ENCODE measurements at regions of chr19 and their contacts with region 1.

Region 1: DNA sequence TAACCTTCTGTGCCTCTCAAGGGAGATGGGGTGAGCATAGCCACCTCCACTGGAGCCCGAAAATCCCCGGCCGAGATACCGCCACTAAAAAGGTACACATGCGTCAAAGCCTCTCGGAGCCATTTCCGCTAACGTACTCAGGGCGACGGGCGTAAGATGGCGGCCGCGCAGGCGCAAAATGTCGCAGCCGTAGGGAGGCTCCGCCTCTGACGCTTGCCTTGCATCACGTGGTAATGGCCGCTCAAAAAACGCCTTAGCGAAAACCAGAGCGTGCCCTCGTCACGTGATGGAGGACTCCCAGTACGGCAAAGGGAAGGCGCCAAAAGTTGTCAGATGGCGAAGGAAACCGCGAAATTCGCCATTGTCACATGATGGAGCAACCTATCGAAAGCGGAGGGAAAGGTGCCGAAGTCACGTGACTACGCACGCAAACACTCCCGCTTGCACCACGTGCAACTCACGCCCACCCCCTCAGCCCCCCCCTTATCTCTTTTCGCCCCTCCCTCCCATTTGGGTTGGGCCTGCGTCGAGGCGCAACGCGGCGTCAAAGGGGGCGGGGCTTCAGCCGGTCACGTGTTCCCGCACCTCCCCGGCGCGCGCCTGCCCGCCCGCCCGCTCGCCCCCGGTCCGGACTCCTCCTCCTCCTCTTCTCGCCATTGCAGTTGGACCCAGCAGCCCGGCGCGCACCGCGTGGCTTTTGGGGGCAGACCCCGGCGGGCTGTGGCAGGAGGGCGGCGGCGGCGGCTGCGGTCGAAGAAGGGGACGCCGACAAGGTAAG is at the start of gene ILF3:
- DNase-seq: peak; percentile 100
- H3K4me3 Mint-ChIP-seq: peak within 1 kb of the TSS; percentile 90
- H3K27ac Mint-ChIP-seq: peak within 1 kb of the TSS; percentile 96
- H3K4me1 Mint-ChIP-seq: peaks cover 35% of the 10 kb centered on the region
- H3K27me3 Mint-ChIP-seq: no peaks in the 10 kb centered on the region
- total RNA-seq, gene ILF3: 355 to 357 TPM

Region 2: DNA sequence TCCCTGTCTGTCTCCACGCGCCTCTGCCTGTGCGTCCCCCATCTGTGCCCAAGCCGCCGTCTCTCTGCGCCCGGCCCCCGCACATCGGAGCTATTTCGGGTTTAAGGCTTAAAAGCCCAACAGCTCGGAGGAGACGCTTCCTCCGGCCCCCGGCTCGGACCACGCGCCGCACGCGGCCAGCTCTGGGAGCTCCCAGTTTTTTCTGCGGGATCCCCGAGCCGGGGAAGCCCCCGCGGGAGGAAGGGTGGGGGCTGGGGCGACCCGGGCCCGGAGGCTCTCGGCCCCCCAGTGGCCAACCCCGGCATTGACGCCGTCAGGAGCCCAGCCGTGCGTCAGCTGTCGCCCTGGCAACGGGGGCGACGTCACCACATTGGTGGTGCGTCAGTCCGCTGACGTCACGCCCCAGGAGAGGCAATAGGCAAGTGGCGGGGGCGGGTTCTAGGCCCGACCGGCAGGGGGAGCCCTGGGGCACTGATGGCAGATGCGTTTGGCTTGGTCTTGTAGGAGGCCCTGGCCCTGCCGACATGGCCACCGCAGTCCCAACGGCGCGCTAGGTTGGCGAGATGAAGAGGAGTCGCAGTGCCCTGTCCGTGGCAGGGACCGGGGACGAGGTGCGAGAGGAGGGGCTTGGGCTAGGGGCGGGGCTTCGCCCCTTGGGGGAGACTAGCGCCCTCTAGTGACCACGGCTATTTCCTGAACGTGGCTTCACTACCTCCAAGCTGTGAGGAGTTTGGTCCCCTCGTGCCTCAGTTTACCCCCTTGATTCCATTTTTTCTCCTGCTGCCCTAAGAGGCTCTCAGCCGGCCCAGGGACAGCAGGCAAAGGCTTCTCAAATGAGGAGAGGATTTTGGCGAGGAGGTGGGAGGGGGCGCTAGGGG is 237.3 kb before region 1 on chr19:
- CTCF ChIA-PET with region 1: interaction called, 5 read pairs
- POLR2A ChIA-PET with region 1: no interaction called
- intact Hi-C with region 1: loop called (anchors 5 kb)
- DNase-seq: peak; percentile 96
- H3K4me3 Mint-ChIP-seq: peak overlapping the region; percentile 73
- H3K27ac Mint-ChIP-seq: peak overlapping the region; percentile 86
- H3K4me1 Mint-ChIP-seq: peaks cover 51% of the 10 kb centered on the region
- H3K27me3 Mint-ChIP-seq: peaks cover 35% of the 10 kb centered on the region

Region 3: DNA sequence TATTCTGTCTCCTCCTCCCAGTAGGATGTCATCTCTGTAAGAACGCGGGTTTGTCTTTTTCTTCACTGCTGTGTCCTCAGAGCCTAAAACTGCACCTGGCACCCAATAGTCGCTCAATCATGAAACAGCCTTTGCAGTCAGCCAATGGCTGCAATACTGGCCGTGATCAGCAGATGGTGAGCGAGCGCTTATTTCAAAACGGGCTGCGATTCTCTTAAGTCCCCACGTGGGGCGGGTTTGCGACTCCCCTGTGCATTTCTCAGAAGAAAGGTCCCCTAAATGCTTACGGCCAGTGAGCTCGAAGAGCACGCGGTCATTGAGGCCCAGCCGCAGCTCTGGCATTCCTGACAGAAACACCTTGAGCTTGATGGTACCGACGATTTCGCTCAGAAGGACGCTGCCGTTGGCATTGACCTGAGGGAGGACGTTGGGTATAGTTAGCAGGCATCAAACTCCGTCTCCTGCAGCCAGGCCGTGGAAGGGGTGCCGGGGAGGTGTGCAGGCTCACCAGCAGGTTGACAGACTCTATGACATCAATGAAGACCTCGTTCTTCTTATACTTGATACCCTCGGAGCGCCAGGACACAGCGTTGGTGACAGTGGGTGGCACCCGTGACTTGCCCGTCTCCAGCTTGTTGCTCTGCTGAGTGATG is 72.8 kb before region 1 on chr19:
- CTCF ChIA-PET with region 1: interaction called, 293 read pairs
- POLR2A ChIA-PET with region 1: no interaction called
- intact Hi-C with region 1: no loop called
- DNase-seq: peak; percentile 93
- H3K4me3 Mint-ChIP-seq: peak overlapping the region; percentile 38
- H3K27ac Mint-ChIP-seq: peak overlapping the region; percentile 52
- H3K4me1 Mint-ChIP-seq: peaks cover 4% of the 10 kb centered on the region
- H3K27me3 Mint-ChIP-seq: peaks cover 2% of the 10 kb centered on the region

Region 4: DNA sequence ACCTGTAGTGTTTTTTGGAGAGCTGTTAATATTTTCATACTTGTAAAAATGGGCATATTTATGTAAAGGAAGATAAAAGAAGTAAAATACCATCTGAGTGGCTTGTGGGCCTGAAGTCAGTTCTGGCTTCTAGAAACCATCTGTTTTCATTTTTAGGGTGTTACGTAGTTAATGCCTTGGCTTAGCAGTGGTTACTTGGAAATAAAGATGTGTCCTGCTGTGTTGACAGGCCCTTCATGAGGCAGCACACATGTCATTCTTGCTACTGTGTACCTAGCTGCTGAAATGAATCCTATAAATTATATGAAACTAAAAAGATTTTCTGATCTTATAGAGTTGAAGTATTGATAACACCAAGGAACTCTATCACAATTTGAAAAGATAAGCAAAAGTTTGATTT is 16.3 kb after region 1 on chr19:
- CTCF ChIA-PET with region 1: interaction called, 3 read pairs
- POLR2A ChIA-PET with region 1: interaction called, 12 read pairs
- intact Hi-C with region 1: no loop called
- DNase-seq: no peak
- H3K4me3 Mint-ChIP-seq: no peak overlapping the region
- H3K27ac Mint-ChIP-seq: no peak overlapping the region
- H3K4me1 Mint-ChIP-seq: peaks cover 30% of the 10 kb centered on the region
- H3K27me3 Mint-ChIP-seq: no peaks in the 10 kb centered on the region

Region 5: GRCh38 chr19:10730923-10731322 is 77.0 kb after region 1 on chr19:
- CTCF ChIA-PET with region 1: no interaction called
- POLR2A ChIA-PET with region 1: no interaction called
- intact Hi-C with region 1: no loop called
- DNase-seq: no peak
- H3K4me3 Mint-ChIP-seq: peak overlapping the region; percentile 26
- H3K27ac Mint-ChIP-seq: peak overlapping the region; percentile 84
- H3K4me1 Mint-ChIP-seq: peaks cover 50% of the 10 kb centered on the region
- H3K27me3 Mint-ChIP-seq: no peaks in the 10 kb centered on the region

Region 6: DNA sequence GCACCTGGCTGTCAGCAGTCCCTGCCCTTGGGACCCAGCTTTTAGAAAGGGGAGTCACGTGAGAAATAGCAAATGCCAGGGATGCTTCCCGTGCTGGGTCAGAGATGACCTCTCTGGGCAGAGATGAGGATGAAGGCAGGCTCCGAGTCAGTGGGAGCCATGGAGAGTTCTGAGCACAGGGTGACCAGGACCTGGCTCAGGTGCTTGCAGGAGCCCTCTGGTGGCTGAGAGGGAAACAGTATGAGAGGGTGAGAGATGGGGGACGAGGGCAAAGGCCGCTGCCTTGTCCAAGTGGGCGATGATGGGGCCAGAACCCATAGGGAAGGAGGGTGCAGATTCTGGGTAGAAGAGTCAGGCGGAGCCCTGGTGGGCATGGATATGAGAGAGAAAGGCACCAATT is 166.3 kb after region 1 on chr19:
- CTCF ChIA-PET with region 1: no interaction called
- POLR2A ChIA-PET with region 1: no interaction called
- intact Hi-C with region 1: no loop called
- DNase-seq: no peak
- H3K4me3 Mint-ChIP-seq: no peak overlapping the region
- H3K27ac Mint-ChIP-seq: peak overlapping the region; percentile 78
- H3K4me1 Mint-ChIP-seq: no peaks in the 10 kb centered on the region
- H3K27me3 Mint-ChIP-seq: no peaks in the 10 kb centered on the region

Region 7: DNA sequence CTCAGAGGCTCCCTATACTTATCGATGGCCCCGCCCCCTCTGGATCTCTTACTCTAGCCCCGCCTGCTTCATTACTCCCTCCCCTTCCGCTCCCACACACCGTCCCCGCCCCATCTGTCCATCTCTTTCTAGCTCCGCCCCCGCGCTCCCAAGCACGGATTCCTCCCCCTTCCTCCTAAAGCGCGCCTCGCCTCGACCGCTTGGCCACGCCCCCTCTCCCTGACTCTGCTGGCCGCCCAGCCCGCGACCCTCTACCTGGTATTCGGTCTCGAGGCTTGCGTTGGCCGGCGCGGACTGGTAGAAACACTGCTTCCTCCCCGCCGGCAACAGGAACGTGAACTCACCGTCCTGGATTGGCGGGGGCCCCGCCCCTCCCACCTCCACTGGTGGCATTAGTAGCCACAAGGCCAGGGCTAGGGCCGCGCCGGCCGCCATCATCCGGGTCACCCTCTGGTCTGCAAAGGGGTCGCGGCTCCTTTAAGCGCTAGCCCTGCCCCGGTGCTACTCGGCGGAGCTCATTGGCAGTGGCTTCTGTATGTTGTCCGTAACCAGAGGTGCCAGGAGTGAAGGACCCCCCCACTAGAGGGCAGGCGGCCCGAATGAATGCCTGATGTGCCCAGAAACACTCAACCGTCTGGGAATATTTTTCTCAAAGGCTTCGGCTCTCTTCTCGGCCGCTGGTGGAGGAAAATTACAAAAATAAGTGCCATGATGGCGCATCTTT is 182.0 kb after region 1 on chr19 and contains the start of gene TMED1:
- CTCF ChIA-PET with region 1: no interaction called
- POLR2A ChIA-PET with region 1: no interaction called
- intact Hi-C with region 1: loop called (anchors 1 kb)
- DNase-seq: peak; percentile 98
- H3K4me3 Mint-ChIP-seq: peak within 1 kb of the TSS; percentile 94
- H3K27ac Mint-ChIP-seq: peak within 1 kb of the TSS; percentile 99
- H3K4me1 Mint-ChIP-seq: peaks cover 15% of the 10 kb centered on the region
- H3K27me3 Mint-ChIP-seq: no peaks in the 10 kb centered on the region
- total RNA-seq, gene TMED1: 18.8 to 19.1 TPM